K562 (cell line): ENCODE measurements at regions of chr1 and their contacts with region 1.

Region 1: GRCh38 chr1:168178638-168179437 is at the start of gene TIPRL:
- DNase-seq: peak; percentile 95 to 99 (median 96)
- ATAC-seq: peak; percentile 97
- H3K4me3 ChIP-seq: peak within 1 kb of the TSS; percentile 62
- H3K27ac ChIP-seq: peak within 1 kb of the TSS; percentile 84
- H3K4me1 ChIP-seq: peaks cover 6 to 11% of the 10 kb centered on the region in 2 experiments; a peak in 4 of 5 replicates
- H3K27me3 ChIP-seq: no peaks in the 10 kb centered on the region
- CTCF ChIP-seq: peak; percentile 74 to 87 (median 82)
- EP300 ChIP-seq: peak; percentile 52
- POLR2A ChIP-seq: peak; percentile 96
- RAD21 ChIP-seq: peak; percentile 58 to 60
- polyA plus RNA-seq, gene TIPRL: 87.0 to 90.2 TPM

Region 2: GRCh38 chr1:168225476-168226190 is 46.8 kb after region 1 on chr1 and contains the start of gene SFT2D2:
- CTCF ChIA-PET with region 1: no interaction called
- POLR2A ChIA-PET with region 1: no interaction called
- in situ Hi-C with region 1: no loop called
- intact Hi-C with region 1: loop called (anchors 2 kb)
- DNase-seq: peak; percentile 91 to 96 (median 95)
- ATAC-seq: peak; percentile 95
- H3K4me3 ChIP-seq: peak within 1 kb of the TSS; percentile 80
- H3K27ac ChIP-seq: peak within 1 kb of the TSS; percentile 91
- H3K4me1 ChIP-seq: peaks cover 20 to 30% of the 10 kb centered on the region in 2 experiments
- H3K27me3 ChIP-seq: no peaks in the 10 kb centered on the region
- CTCF ChIP-seq: no peak
- EP300 ChIP-seq: no peak
- POLR2A ChIP-seq: peak; percentile 96
- RAD21 ChIP-seq: no peak
- polyA plus RNA-seq, gene SFT2D2: 3.4 to 6.1 TPM